Dorsolateral prefrontal cortex (tissue), 120 donors: ENCODE measurements at regions of chr14 and their contacts with region 1.

Region 1: GRCh38 chr14:94173885-94174603 is at the start of gene PPP4R4:
- DNase-seq: peak; percentile 56 to 87 (median 74)
- H3K4me3 ChIP-seq: peak within 1 kb of the TSS; percentile 62 to 93 (median 80)
- H3K27ac ChIP-seq: peak within 1 kb of the TSS in 51 of 59 donors; percentile 3 to 84 (median 66)
- H3K27me3 ChIP-seq: peaks cover 0 to 7% (median 0%) of the 10 kb centered on the region in 45 donors
- CTCF ChIP-seq: peak in 4 of 56 donors; percentile 2 to 19 (median 16)
- total RNA-seq, gene PPP4R4: 9.9 to 65.6 (median 28.7) TPM

Region 2: DNA sequence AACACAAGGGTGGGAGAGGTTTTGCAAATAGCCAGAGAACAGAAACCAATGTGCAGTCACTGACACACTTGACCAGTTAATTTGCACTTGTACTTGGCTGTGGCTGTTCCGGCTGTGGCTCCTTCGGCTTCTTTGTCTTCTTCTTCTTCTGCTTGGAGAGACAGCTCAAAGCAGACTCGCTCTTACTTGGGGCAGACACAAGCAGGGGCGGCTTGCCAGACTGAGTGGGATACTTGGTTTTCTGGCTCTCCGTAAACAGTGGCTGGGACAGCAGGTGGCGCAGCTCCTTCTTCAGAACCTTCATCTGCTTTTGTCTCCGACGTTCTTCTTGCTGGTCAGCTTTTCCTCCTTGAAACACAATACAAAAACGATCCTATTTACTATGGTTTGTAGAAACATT is 122.9 kb before region 1 on chr14:
- intact Hi-C with region 1: loop called in 1 of 2 experiments (anchors 5 kb)
- DNase-seq: peak; percentile 54 to 89 (median 80)
- H3K4me3 ChIP-seq: peak overlapping the region in 1 of 59 donors; percentile 17
- H3K27ac ChIP-seq: peak overlapping the region in 46 of 59 donors; percentile 1 to 75 (median 44)
- H3K27me3 ChIP-seq: no peaks in the 10 kb centered on the region
- CTCF ChIP-seq: peak; percentile 27 to 79 (median 64)

Region 3: GRCh38 chr14:94998670-94999072 is 824.6 kb after region 1 on chr14:
- intact Hi-C with region 1: no loop called
- DNase-seq: no peak
- H3K4me3 ChIP-seq: no peak overlapping the region
- H3K27ac ChIP-seq: no peak overlapping the region
- H3K27me3 ChIP-seq: peaks cover 0 to 50% (median 13%) of the 10 kb centered on the region in 45 donors
- CTCF ChIP-seq: no peak